ENCODE measurements at regions of chr10 and their contacts with region 1.

Region 1: GRCh38 chr10:51960494-51960895 is 261.1 kb upstream of the CSTF2T start:
- DNase-seq: peak; percentile 67
- H3K4me3 Mint-ChIP-seq: no peak overlapping the region
- H3K27ac Mint-ChIP-seq: no peak overlapping the region
- H3K4me1 Mint-ChIP-seq: no peaks in the 10 kb centered on the region
- H3K27me3 Mint-ChIP-seq: peaks cover 14% of the 10 kb centered on the region

Region 2: GRCh38 chr10:51001587-51001986 is 958.9 kb before region 1 on chr10:
- intact Hi-C with region 1: loop called (anchors 10 kb)
- DNase-seq: no peak
- H3K4me3 Mint-ChIP-seq: no peak overlapping the region
- H3K27ac Mint-ChIP-seq: no peak overlapping the region
- H3K4me1 Mint-ChIP-seq: no peaks in the 10 kb centered on the region
- H3K27me3 Mint-ChIP-seq: peaks cover 8% of the 10 kb centered on the region

Region 3: DNA sequence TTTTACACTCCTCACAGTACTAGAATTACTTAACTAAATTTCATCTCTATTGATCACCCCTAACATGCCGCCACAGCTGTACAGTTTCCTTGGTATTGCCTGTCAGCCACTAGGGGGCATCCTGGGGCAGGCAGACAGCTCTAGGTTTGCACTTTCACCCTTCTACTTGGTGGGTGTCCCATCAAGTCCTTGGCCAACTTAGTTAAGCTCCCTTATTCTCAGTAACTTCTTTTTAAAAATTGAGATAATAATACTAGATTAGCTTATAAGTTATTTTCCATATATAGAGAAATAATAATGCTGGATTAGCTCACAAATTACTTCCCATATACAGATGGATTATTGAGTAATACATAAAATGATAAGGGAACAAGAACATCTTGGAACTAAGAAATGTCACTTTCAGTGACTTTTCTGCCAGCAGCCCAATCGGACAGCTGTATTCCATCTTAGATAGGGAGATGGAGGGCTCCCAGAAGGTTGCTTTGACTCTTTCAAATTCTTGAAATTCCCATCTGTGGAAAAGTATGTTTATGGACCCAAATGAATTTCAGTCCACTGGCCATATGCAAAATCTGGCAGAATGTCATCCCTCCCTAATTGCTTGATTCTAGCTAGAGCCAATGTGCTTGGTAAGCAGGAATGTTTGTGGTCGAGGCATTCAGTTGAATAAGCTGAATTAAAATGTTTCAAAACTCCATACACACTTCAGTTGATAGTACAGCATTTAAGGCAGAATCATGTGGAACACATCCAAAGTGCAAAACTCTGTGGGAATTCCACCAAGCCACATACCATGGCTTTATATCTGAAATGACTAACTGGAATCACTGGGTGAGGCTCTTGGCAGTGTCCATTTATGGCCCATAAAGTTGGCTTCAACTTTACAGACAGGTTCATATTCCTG is 570.8 kb before region 1 on chr10:
- intact Hi-C with region 1: loop called (anchors 1 kb)
- DNase-seq: peak; percentile 82
- H3K4me3 Mint-ChIP-seq: no peak overlapping the region
- H3K27ac Mint-ChIP-seq: no peak overlapping the region
- H3K4me1 Mint-ChIP-seq: no peaks in the 10 kb centered on the region
- H3K27me3 Mint-ChIP-seq: no peaks in the 10 kb centered on the region

Region 4: GRCh38 chr10:52106899-52107298 is 146.4 kb after region 1 on chr10:
- intact Hi-C with region 1: no loop called
- DNase-seq: no peak
- H3K4me3 Mint-ChIP-seq: no peak overlapping the region
- H3K27ac Mint-ChIP-seq: no peak overlapping the region
- H3K4me1 Mint-ChIP-seq: no peaks in the 10 kb centered on the region
- H3K27me3 Mint-ChIP-seq: no peaks in the 10 kb centered on the region

Measured in activated CD4-positive, alpha-beta T cell treated with anti-CD3 and anti-CD28 coated beads, Interleukin-2, amount 10 ng/mL, durations not matched to agents 24 days and 14 days (primary cell).